Right cardiac atrium (tissue), 5 donors: ENCODE measurements at regions of chr3 and their contacts with region 1.

Region 1: DNA sequence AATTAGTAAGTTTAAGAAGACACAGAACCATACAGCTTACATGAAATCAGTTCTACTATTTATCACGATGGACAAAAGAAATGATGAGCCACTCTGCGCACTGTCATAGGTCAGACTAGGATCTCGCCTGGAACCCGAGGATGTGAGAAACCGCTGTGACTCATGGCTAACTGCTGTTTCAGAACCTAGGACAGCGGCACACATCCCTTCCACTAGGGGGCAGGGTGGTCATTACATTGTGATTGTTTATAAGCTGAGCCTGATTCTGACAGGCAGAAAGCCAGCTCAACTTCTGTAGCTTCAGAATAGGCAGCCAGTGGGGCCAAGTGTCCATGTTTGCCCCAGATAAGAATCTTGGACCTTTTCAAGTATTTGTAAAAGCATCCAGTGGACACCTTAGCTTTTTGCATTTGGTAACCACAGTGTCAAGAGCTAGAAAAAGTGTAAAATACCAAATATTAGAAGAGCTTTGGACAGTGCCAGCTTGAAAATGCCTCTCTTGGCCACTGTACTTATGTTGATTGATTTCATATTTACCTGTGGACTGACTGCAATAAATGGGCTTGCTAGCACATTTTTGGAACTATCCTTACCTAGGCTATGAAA is 115.8 kb downstream of the KBTBD8 start:
- DNase-seq: peak; percentile 56 to 83 (median 77)
- ATAC-seq: peak; percentile 71 to 79
- H3K4me3 ChIP-seq: no peak overlapping the region
- H3K27ac ChIP-seq: no peak overlapping the region
- H3K4me1 ChIP-seq: no peaks in the 10 kb centered on the region
- H3K27me3 ChIP-seq: no peaks in the 10 kb centered on the region

Region 2: GRCh38 chr3:67167481-67167880 is 53.6 kb after region 1 on chr3:
- intact Hi-C with region 1: no loop called
- DNase-seq: no peak
- ATAC-seq: no peak
- H3K4me3 ChIP-seq: no peak overlapping the region
- H3K27ac ChIP-seq: no peak overlapping the region
- H3K4me1 ChIP-seq: no peaks in the 10 kb centered on the region
- H3K27me3 ChIP-seq: no peaks in the 10 kb centered on the region

Region 3: GRCh38 chr3:68893600-68894239 is 1779.8 kb after region 1 on chr3:
- intact Hi-C with region 1: loop called in 3 of 4 experiments (anchors 10 kb)
- DNase-seq: no peak
- ATAC-seq: no peak
- H3K4me3 ChIP-seq: no peak overlapping the region
- H3K27ac ChIP-seq: no peak overlapping the region
- H3K4me1 ChIP-seq: no peaks in the 10 kb centered on the region
- H3K27me3 ChIP-seq: no peaks in the 10 kb centered on the region